Posterior vena cava (tissue), 2 donors: ENCODE measurements at regions of chr4 and their contacts with region 1.

Region 1: DNA sequence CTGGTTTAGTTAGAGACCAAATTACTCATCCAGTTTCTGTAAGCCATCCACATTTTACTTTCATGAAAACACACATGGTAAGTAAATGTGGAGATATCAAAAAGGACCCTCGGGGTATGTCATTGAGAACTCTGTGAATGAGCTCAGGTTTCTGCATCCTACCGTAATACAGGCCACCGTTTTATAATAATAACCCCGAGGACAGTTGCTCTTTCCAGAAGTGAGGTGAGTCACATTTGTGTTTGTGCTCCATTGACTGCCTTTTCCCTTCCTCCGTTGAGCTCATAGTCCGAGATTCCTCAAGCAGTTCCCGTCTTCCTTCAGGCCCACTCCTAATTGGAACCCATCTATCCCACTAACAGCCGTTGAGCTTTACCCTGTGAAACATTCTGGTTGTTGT is 95.3 kb downstream of the GRID2 start:
- DNase-seq: no peak

Region 2: GRCh38 chr4:91147067-91147466 is 1252.0 kb before region 1 on chr4:
- intact Hi-C with region 1: no loop called
- DNase-seq: peak; percentile 35

Region 3: DNA sequence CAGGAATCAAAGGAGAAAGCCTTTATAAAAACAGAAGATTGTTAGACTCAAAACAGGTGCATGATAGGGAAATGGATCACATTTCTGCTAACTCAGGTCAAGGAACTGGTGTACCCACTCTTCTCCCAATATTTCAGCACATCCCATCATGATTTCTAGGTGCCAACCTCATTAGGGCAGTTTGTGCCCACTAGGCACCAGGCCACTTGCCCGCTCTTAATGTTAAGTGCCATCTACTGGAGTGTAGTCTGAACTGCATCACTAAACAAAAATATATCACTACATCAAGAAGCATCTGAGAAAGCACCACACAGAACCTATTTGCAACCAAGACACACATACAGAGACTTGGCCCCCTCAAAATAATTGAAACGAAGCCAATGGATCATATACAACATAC is 235.7 kb before region 1 on chr4:
- intact Hi-C with region 1: loop called in 1 of 2 experiments (anchors 5 kb)
- DNase-seq: no peak

Region 4: GRCh38 chr4:92561702-92562101 is 162.7 kb after region 1 on chr4:
- intact Hi-C with region 1: no loop called
- DNase-seq: no peak